K562 (cell line): ENCODE measurements at regions of chr14 and their contacts with region 1.

Region 1: DNA sequence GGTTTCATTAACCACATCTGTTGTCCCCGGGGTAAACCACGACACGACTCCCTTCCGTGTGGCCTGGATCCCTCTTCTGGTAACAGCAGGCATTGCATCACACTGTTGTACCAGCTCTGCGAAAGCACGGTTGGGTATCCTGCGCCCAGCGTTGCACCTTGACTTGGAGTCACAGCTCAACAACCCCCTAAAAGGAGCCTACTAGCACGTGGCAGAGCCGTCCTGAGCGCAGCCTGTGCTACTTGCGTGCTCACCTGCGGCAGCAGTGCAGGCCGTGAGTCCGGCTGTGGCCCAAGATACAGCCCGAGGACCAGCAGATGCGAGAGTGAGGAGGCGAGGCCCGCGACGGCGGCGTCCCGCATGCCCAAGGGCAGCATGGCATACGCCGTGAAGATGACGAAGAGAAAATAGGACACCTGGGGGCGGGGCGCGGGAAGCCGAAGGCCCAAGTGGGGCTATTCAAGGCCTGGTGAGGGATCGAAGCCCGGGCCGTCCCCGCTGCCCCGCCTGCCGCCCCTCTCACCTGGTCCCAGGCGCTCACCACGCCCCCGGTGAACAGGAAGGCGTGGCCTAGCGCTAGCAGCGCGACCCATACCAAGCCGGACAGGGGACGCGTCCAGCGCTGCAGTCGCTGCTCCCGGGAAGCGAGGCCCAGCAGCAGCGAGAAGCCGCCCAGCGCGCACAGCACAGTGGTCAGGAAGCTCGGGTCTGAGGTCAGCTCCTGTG is 2.4 kb downstream of the ADCY4 start:
- DNase-seq: peak; percentile 76 to 81 (median 78)
- ATAC-seq: peak; percentile 83
- H3K4me3 ChIP-seq: peak overlapping the region; percentile 21
- H3K27ac ChIP-seq: no peak overlapping the region
- H3K4me1 ChIP-seq: peaks cover 5 to 36% of the 10 kb centered on the region in 2 experiments; a peak in 4 of 5 replicates
- H3K27me3 ChIP-seq: peaks cover 0 to 8% of the 10 kb centered on the region in 2 experiments; a peak in 1 of 5 replicates
- CTCF ChIP-seq: peak; percentile 70 to 85 (median 72)
- EP300 ChIP-seq: no peak
- POLR2A ChIP-seq: no peak
- RAD21 ChIP-seq: peak; percentile 33 to 48; a peak in 3 of 4 replicates

Region 2: GRCh38 chr14:24366721-24367513 is 34.5 kb after region 1 on chr14:
- CTCF ChIA-PET with region 1: no interaction called
- POLR2A ChIA-PET with region 1: no interaction called
- in situ Hi-C with region 1: no loop called
- intact Hi-C with region 1: loop called (anchors 5 kb)
- DNase-seq: peak; percentile 54 to 77 (median 64)
- ATAC-seq: peak; percentile 83
- H3K4me3 ChIP-seq: peak overlapping the region; percentile 43
- H3K27ac ChIP-seq: peak overlapping the region; percentile 69
- H3K4me1 ChIP-seq: peaks cover 12 to 45% of the 10 kb centered on the region in 2 experiments; a peak in 4 of 5 replicates
- H3K27me3 ChIP-seq: no peaks in the 10 kb centered on the region
- CTCF ChIP-seq: no peak
- EP300 ChIP-seq: no peak
- POLR2A ChIP-seq: no peak
- RAD21 ChIP-seq: no peak

Region 3: GRCh38 chr14:24411443-24412389 is 79.3 kb after region 1 on chr14:
- CTCF ChIA-PET with region 1: interaction called, 4 read pairs
- POLR2A ChIA-PET with region 1: no interaction called
- in situ Hi-C with region 1: no loop called
- intact Hi-C with region 1: loop called (anchors 1 kb)
- DNase-seq: peak; percentile 52 to 68 (median 53)
- ATAC-seq: peak; percentile 83
- H3K4me3 ChIP-seq: no peak overlapping the region
- H3K27ac ChIP-seq: no peak overlapping the region
- H3K4me1 ChIP-seq: peaks cover 4 to 30% of the 10 kb centered on the region in 2 experiments; a peak in 4 of 5 replicates
- H3K27me3 ChIP-seq: peaks cover 0 to 8% of the 10 kb centered on the region in 2 experiments; a peak in 1 of 5 replicates
- CTCF ChIP-seq: peak; percentile 64 to 73 (median 72)
- EP300 ChIP-seq: no peak
- POLR2A ChIP-seq: no peak
- RAD21 ChIP-seq: peak; percentile 10 to 68; a peak in 2 of 4 replicates

Region 4: GRCh38 chr14:24473211-24473610 is 140.8 kb after region 1 on chr14:
- CTCF ChIA-PET with region 1: no interaction called
- POLR2A ChIA-PET with region 1: no interaction called
- in situ Hi-C with region 1: no loop called
- intact Hi-C with region 1: no loop called
- DNase-seq: no peak
- ATAC-seq: no peak
- H3K4me3 ChIP-seq: no peak overlapping the region
- H3K27ac ChIP-seq: no peak overlapping the region
- H3K4me1 ChIP-seq: no peaks in the 10 kb centered on the region
- H3K27me3 ChIP-seq: no peaks in the 10 kb centered on the region
- CTCF ChIP-seq: no peak
- EP300 ChIP-seq: no peak
- POLR2A ChIP-seq: no peak
- RAD21 ChIP-seq: no peak

Region 5: GRCh38 chr14:24556756-24557155 is 224.3 kb after region 1 on chr14:
- CTCF ChIA-PET with region 1: no interaction called
- POLR2A ChIA-PET with region 1: no interaction called
- in situ Hi-C with region 1: no loop called
- intact Hi-C with region 1: no loop called
- DNase-seq: no peak
- ATAC-seq: no peak
- H3K4me3 ChIP-seq: no peak overlapping the region
- H3K27ac ChIP-seq: no peak overlapping the region
- H3K4me1 ChIP-seq: no peaks in the 10 kb centered on the region
- H3K27me3 ChIP-seq: no peaks in the 10 kb centered on the region
- CTCF ChIP-seq: no peak
- EP300 ChIP-seq: no peak
- POLR2A ChIP-seq: no peak
- RAD21 ChIP-seq: no peak

Region 6: GRCh38 chr14:24678801-24679247 is 346.4 kb after region 1 on chr14:
- CTCF ChIA-PET with region 1: interaction called, 4 read pairs
- POLR2A ChIA-PET with region 1: no interaction called
- in situ Hi-C with region 1: loop called (anchors 25 kb)
- intact Hi-C with region 1: no loop called
- DNase-seq: peak; percentile 69 to 87 (median 72)
- ATAC-seq: peak; percentile 99
- H3K4me3 ChIP-seq: peak overlapping the region; percentile 29; the same call in 1 of the 2 replicates
- H3K27ac ChIP-seq: no peak overlapping the region
- H3K4me1 ChIP-seq: no peaks in the 10 kb centered on the region
- H3K27me3 ChIP-seq: no peaks in the 10 kb centered on the region
- CTCF ChIP-seq: peak; percentile 96 to 100 (median 99)
- EP300 ChIP-seq: no peak
- POLR2A ChIP-seq: no peak
- RAD21 ChIP-seq: peak; percentile 65 to 72